Cardiac septum (tissue), 1 donor: ENCODE measurements at regions of chr1 and their contacts with region 1.

Region 1: GRCh38 chr1:87953732-87954344 is 625.2 kb downstream of the LMO4 start:
- DNase-seq: peak; percentile 78

Region 2: DNA sequence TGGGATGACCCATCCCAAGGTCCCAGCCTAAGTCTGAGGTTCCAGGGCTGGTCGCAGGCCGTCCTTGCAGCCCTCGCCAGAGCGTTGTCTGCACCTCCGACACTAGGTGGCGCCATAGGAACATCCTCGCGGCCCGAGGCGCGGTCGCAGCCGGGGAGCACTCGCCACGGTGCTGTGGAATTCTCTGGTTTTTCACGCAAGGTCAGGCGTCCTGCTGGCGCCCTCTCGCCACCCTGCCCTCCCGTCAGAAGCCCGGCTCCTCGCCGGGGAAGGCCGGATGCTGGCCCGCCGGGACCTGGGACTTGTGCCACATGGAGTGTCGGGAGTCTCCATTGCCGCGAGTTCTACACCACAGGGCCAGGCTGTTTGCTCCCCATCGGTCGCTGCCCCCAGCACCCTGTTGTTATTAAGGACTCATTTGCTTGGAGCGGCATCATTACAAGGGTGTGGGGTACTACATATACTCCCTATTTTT is 822.0 kb before region 1 on chr1:
- intact Hi-C with region 1: loop called (anchors 5 kb)
- DNase-seq: peak; percentile 94

Region 3: DNA sequence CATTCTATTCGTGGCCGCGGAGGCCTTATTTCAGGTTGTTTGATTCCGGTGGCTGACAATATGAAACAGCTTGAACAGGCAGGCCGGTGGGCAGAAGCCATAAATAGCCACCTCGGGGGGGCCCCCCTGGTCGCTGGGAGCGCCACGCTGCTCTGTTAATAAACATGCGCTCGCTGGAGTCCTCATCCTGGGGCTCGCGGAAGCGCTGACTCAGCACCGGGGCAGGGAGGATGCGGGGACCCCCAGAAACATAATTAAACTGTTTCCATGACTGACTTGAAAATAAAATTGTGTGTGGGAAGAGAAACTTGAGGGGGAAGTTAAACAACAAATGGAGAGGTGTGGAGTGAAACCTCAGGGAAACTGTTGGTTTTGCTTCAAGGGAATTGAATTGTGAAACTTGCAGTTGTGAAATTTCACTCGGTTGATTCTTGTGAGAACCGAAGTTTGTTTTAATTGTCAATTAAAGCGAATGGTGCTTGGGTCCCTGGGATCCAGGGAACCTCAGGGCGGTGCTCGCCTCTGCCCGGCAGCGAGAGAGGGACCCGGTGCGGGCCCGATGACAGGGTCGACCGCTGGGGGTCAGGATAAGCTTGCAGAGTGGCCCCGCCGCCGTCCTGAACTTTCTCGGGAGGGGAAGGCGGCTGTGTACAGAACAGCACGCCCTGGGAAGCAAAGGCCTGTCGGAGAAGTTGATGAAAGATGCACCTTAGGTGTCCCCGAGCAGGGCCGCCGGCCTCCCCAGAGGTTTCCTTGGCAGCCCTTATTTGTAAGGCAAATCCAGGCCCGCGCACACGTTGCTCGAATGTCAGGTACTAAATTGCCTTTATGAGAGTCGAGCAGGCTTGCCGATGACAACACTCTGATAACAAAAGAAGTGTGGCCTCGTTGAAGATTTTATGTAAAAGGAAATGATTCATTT is 802.1 kb before region 1 on chr1:
- intact Hi-C with region 1: loop called (anchors 5 kb)
- DNase-seq: peak; percentile 84